ENCODE measurements at regions of chr7 and their contacts with region 1.

Region 1: GRCh38 chr7:25093268-25093826 is 31.7 kb downstream of the CYCS start:
- DNase-seq: peak; percentile 74
- H3K4me3 ChIP-seq: no peak overlapping the region
- H3K27ac ChIP-seq: no peak overlapping the region
- H3K4me1 ChIP-seq: peaks cover 2% of the 10 kb centered on the region
- H3K27me3 ChIP-seq: peaks cover 4% of the 10 kb centered on the region in 2 experiments
- CTCF ChIP-seq: peak; percentile 89 to 90
- POLR2A ChIP-seq: no peak

Region 2: DNA sequence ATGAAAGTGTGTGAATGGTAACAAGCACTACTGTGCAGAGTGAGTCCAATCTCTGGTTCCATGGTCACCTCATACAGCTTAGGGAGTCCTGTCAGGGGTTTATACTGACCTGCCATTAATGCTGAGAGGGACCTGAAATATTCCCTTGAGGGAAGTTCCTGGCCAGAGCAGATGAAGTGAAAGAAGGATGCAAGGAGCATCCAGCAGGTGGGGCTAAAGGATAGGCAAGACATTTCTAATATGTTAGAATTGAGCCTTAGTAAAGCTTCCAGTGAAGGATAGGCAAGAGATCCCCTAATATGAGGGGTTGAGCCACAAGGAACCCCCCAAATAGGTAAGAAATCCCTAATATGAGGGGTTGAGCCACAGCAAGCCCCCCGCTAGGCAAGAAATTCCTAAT is 1438.8 kb before region 1 on chr7:
- CTCF ChIA-PET with region 1: no interaction called
- POLR2A ChIA-PET with region 1: no interaction called
- dilution Hi-C with region 1: no loop called
- intact Hi-C with region 1: loop called (anchors 10 kb)
- DNase-seq: peak; percentile 35
- H3K4me3 ChIP-seq: no peak overlapping the region
- H3K27ac ChIP-seq: no peak overlapping the region
- H3K4me1 ChIP-seq: no peaks in the 10 kb centered on the region
- H3K27me3 ChIP-seq: no peaks in the 10 kb centered on the region
- CTCF ChIP-seq: peak; percentile 47 to 50
- POLR2A ChIP-seq: no peak

Region 3: DNA sequence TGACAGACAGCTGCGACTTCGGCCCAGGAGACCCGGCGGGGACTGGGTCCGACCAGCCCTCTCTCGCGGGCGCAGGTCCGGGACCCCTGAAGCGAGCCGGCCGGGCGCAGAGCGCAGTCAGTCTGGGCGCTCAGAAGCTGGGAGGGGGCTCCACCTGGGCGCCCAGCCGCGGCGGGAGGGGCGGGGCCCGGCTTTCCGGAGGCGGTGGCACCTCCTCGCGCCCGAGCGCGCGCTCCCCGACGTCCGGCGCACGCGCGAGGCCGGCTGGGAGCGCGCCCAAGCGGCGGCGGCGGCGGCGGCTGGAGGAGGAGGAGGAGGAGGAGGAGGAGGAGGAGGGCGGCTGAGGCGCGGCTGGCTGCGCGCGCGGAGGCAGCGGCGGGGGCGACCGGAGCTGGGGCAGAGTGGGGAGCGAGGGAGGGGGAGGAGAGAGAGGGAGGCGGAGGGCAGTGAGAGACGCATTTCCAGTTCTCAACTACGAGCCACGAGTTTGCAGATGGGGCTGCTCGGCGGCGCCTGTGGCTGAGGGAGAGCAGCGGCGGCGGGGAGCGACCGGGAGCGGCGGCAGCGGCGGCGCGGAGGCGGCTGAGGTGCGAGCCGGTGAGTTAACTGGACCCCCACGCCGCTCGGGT is 520.2 kb before region 1 on chr7 and contains the start of gene PALS2:
- CTCF ChIA-PET with region 1: interaction called, 8 read pairs
- POLR2A ChIA-PET with region 1: no interaction called
- dilution Hi-C with region 1: no loop called
- intact Hi-C with region 1: loop called (anchors 1 kb)
- DNase-seq: peak; percentile 74
- H3K4me3 ChIP-seq: peak within 1 kb of the TSS; percentile 73 to 92 (median 82)
- H3K27ac ChIP-seq: peak within 1 kb of the TSS; percentile 61
- H3K4me1 ChIP-seq: peaks cover 17% of the 10 kb centered on the region
- H3K27me3 ChIP-seq: peaks cover 25 to 30% of the 10 kb centered on the region in 2 experiments
- CTCF ChIP-seq: no peak
- POLR2A ChIP-seq: no peak
- total RNA-seq, gene PALS2: 23.6 and 24.4 TPM in 2 replicates

Region 4: DNA sequence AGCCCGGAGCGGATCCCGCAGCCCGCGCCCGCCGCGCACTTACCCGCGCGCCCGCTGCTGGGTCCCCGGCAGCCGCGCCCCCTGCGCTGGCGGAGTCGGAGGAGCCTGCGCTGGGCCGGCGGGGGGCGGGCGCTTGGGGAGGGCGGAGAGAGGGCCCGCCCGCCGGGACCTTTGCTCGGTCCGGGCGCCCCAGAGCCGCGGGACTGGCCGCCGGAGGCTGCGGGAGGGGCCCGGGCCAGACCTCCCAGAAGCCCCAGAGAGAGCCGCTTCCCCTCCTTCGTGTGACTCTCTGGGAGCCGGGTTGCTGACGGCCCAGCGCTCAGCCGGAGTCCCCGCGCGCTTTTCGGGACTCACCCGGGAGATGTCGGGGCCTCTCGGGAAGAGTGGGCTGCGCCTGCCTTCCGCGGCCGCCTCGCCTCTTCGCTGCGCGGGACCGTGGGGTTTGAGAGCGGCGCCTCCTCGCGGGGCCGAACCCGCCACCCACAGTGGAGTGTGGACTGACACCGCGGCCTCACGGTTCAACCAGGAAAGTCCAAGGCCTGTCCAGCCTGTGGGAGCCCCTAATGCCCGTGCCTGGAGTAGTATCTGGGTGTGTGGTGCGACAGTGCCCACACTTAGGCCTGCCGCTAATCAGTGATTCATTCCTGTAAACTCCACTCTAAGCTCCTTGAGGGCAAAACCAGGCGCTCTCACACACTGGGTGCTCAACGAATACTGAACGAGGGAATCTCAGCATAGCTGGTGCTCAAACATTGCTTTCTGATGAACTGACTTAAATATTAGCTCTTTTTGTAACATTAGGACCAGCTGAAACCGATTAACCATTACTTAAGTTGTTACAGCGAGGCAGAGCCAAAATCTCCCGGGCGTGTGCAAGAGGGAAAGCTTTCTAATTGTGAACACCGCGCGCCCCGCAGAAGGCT is 335.7 kb before region 1 on chr7 and contains the start of gene GSDME:
- CTCF ChIA-PET with region 1: interaction called, 6 read pairs
- POLR2A ChIA-PET with region 1: interaction called, 6 read pairs
- dilution Hi-C with region 1: no loop called
- intact Hi-C with region 1: loop called (anchors 5 kb)
- DNase-seq: peak; percentile 62
- H3K4me3 ChIP-seq: peak within 1 kb of the TSS; percentile 55 to 77 (median 75)
- H3K27ac ChIP-seq: peak within 1 kb of the TSS; percentile 63
- H3K4me1 ChIP-seq: peaks cover 24% of the 10 kb centered on the region
- H3K27me3 ChIP-seq: peaks cover 3% of the 10 kb centered on the region in 2 experiments
- CTCF ChIP-seq: no peak
- POLR2A ChIP-seq: peak; percentile 69
- total RNA-seq, gene GSDME: 21.3 and 23.4 TPM in 2 replicates

Region 5: DNA sequence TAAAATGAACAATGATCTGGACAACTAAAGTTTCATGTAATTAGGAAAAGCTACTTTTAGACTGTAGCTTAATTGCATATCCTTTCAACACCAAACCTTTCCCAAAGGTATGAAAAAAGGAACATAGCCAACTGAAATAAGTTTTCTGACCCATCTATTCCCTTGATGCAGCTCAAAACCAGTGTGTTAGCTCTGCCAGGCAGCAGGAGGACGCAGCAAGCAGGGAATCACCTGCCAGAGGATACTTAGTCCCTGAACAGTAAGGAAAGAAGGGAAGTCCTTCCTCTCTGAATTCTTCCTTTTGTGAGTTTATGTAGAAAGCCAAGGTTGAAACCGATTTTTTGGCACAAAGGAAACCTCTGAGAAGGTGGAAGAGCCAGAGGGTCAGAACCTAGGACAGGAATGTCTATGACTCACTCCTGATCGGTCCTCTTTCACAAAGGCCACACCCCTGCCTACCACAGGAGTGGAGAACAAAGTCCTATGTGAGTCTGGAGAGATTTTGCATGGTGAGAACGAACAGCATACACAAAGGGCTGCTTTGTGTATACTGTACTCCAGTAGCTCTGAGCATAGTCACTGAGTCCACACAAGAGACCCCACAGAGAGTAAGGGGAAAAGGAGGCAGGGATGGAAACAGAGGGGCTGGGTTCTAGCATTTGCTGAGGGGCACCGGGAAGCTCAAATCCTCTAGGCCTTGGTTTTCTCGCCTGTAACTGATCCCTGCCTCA is 267.3 kb before region 1 on chr7:
- CTCF ChIA-PET with region 1: interaction called, 97 read pairs
- POLR2A ChIA-PET with region 1: no interaction called
- dilution Hi-C with region 1: no loop called
- intact Hi-C with region 1: no loop called
- DNase-seq: peak; percentile 12
- H3K4me3 ChIP-seq: no peak overlapping the region
- H3K27ac ChIP-seq: no peak overlapping the region
- H3K4me1 ChIP-seq: peaks cover 24% of the 10 kb centered on the region
- H3K27me3 ChIP-seq: no peaks in the 10 kb centered on the region
- CTCF ChIP-seq: no peak
- POLR2A ChIP-seq: no peak

Region 6: DNA sequence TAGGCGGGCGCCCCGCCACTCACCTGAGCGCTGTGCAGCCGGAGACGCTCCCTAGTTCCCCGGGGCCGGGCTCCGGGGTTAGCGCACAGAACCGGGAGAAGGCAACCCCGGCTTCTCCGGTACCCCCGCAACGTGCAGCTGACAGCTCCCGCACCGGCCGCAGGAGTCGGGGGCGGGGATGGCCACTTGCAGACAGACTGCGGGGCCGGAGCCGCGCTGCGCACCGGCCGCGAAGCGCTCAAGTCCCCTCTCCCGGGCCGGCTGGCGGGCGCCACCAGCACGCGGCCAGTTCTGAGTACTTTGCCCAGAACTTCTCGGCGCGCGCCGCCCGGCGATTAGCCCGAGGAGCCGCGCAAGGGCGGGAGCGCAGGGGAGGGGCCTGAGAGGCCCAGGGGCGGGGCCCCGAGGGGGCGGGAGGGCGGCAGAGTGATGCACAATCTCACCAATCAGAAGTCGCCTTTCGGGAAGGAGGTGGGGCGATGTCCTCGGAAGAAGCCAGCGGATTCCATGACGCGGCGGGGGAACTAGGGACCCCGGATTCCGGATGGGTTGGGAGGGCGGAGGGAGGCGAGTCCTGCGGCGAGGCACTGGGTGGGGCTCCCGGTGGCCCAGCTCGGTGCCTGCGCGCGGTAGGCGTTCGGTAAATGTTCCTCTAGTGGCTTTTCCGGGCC is 113.3 kb before region 1 on chr7 and contains the start of gene OSBPL3:
- CTCF ChIA-PET with region 1: interaction called, 57 read pairs
- POLR2A ChIA-PET with region 1: no interaction called
- dilution Hi-C with region 1: no loop called
- intact Hi-C with region 1: loop called (anchors 1 kb)
- DNase-seq: peak; percentile 95
- H3K4me3 ChIP-seq: peak within 1 kb of the TSS; percentile 71 to 82 (median 75)
- H3K27ac ChIP-seq: peak within 1 kb of the TSS; percentile 65
- H3K4me1 ChIP-seq: peaks cover 38% of the 10 kb centered on the region
- H3K27me3 ChIP-seq: no peaks in the 10 kb centered on the region
- CTCF ChIP-seq: no peak
- POLR2A ChIP-seq: peak; percentile 58
- total RNA-seq, gene OSBPL3: 27.1 and 31.3 TPM in 2 replicates

Region 7: GRCh38 chr7:25083201-25083600 is 10.1 kb before region 1 on chr7:
- CTCF ChIA-PET with region 1: interaction called, 25 read pairs
- POLR2A ChIA-PET with region 1: no interaction called
- dilution Hi-C with region 1: no loop called
- intact Hi-C with region 1: no loop called
- DNase-seq: no peak
- H3K4me3 ChIP-seq: no peak overlapping the region
- H3K27ac ChIP-seq: no peak overlapping the region
- H3K4me1 ChIP-seq: no peaks in the 10 kb centered on the region
- H3K27me3 ChIP-seq: peaks cover 1 to 2% of the 10 kb centered on the region in 2 experiments
- CTCF ChIP-seq: no peak
- POLR2A ChIP-seq: no peak

Measured in endothelial cell of umbilical vein (primary cell).